Activated CD8-positive, alpha-beta T cell treated with anti-CD3 and anti-CD28 coated beads for 36 hours (primary cell): ENCODE measurements at regions of chr7 and their contacts with region 1.

Region 1: DNA sequence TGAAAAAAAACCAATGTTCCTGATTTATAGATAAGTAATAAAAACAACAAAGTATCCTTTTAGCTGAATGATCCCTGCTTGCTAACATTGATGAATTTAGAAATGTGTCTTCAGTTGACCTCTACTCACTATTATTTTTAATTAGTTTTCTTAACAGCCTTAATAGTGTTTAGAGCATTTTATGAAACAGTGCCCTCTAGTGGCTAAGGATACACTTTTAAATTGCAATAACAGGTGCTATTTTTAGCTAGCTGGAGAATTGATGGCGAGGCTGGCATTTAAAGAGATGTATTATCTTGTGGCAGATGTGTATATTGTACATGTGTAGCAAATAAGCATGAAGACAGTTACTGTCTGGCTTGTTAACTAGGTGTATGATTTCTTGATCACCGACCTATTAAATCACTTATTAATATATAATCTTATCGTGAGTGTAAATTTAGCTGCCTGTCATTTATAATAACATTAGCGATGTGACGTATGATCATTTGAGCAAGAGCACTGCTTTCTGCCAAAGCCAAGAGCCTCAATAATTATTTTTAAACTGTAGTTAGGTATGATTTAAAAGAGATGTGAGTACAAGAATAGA is 451.9 kb downstream of the DPP6 start:
- DNase-seq: no peak
- ATAC-seq: no peak
- H3K4me3 Mint-ChIP-seq: no peak overlapping the region
- H3K27ac Mint-ChIP-seq: no peak overlapping the region
- H3K4me1 Mint-ChIP-seq: no peaks in the 10 kb centered on the region
- H3K27me3 Mint-ChIP-seq: no peaks in the 10 kb centered on the region
- CTCF ChIP-seq: peak; percentile 79

Region 2: DNA sequence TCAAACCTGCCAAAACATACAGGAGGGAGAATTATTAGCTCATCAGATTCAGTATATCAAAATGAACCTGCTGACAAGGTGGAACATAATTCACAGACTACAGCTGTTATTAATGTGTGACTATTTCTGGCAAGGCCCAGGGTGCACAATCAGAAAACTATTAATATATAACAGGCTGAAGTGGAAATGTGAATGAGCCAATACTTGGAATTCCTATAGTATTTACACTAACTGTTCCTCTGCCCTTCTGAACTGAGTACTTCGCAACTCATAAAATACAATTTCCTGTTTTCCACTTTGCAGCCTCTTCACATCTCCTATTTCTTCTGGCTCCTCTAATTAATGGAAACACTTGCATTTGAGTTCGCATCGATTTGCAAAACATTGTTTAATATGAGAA is 121.0 kb before region 1 on chr7:
- CTCF ChIA-PET with region 1: no interaction called
- POLR2A ChIA-PET with region 1: no interaction called
- intact Hi-C with region 1: no loop called
- DNase-seq: no peak
- ATAC-seq: no peak
- H3K4me3 Mint-ChIP-seq: no peak overlapping the region
- H3K27ac Mint-ChIP-seq: no peak overlapping the region
- H3K4me1 Mint-ChIP-seq: no peaks in the 10 kb centered on the region
- H3K27me3 Mint-ChIP-seq: no peaks in the 10 kb centered on the region
- CTCF ChIP-seq: no peak

Region 3: DNA sequence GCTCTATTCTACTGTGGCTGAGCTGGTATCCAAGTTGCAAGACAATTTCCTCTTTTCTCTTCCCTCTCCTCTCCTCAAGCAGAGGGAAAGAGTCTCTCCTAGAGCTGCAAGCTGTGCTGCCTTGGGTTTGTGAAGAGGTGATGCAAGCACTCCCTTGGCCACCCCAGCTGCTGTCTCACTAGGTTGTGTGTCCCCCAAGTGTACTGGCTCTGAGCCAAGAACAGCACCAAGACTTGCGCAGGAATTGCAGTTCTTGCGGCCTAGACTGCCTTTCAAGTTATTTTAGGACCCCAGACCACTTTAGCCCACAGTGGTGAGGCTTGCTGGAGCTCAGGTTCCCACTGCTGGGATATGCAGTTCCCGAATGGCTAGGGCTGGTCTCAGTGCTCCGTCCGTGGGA is 40.3 kb before region 1 on chr7:
- CTCF ChIA-PET with region 1: no interaction called
- POLR2A ChIA-PET with region 1: no interaction called
- intact Hi-C with region 1: no loop called
- DNase-seq: no peak
- ATAC-seq: no peak
- H3K4me3 Mint-ChIP-seq: no peak overlapping the region
- H3K27ac Mint-ChIP-seq: no peak overlapping the region
- H3K4me1 Mint-ChIP-seq: no peaks in the 10 kb centered on the region
- H3K27me3 Mint-ChIP-seq: no peaks in the 10 kb centered on the region
- CTCF ChIP-seq: no peak

Region 4: GRCh38 chr7:154493594-154493993 is 10.5 kb before region 1 on chr7:
- CTCF ChIA-PET with region 1: interaction called, 13 read pairs
- POLR2A ChIA-PET with region 1: no interaction called
- intact Hi-C with region 1: no loop called
- DNase-seq: no peak
- ATAC-seq: no peak
- H3K4me3 Mint-ChIP-seq: no peak overlapping the region
- H3K27ac Mint-ChIP-seq: no peak overlapping the region
- H3K4me1 Mint-ChIP-seq: no peaks in the 10 kb centered on the region
- H3K27me3 Mint-ChIP-seq: no peaks in the 10 kb centered on the region
- CTCF ChIP-seq: no peak

Region 5: GRCh38 chr7:154532771-154533170 is 28.7 kb after region 1 on chr7:
- CTCF ChIA-PET with region 1: no interaction called
- POLR2A ChIA-PET with region 1: no interaction called
- intact Hi-C with region 1: no loop called
- DNase-seq: no peak
- ATAC-seq: no peak
- H3K4me3 Mint-ChIP-seq: no peak overlapping the region
- H3K27ac Mint-ChIP-seq: no peak overlapping the region
- H3K4me1 Mint-ChIP-seq: no peaks in the 10 kb centered on the region
- H3K27me3 Mint-ChIP-seq: no peaks in the 10 kb centered on the region
- CTCF ChIP-seq: no peak